Transverse colon (tissue), 4 donors: ENCODE measurements at regions of chr10 and their contacts with region 1.

Region 1: GRCh38 chr10:115849197-115849596 is 423.8 kb downstream of the GFRA1 start:
- DNase-seq: no peak
- H3K4me3 ChIP-seq: no peak overlapping the region
- H3K27ac ChIP-seq: no peak overlapping the region
- H3K4me1 ChIP-seq: no peaks in the 10 kb centered on the region
- H3K27me3 ChIP-seq: no peaks in the 10 kb centered on the region
- CTCF ChIP-seq: no peak
- EP300 ChIP-seq: no peak
- POLR2A ChIP-seq: no peak

Region 2: DNA sequence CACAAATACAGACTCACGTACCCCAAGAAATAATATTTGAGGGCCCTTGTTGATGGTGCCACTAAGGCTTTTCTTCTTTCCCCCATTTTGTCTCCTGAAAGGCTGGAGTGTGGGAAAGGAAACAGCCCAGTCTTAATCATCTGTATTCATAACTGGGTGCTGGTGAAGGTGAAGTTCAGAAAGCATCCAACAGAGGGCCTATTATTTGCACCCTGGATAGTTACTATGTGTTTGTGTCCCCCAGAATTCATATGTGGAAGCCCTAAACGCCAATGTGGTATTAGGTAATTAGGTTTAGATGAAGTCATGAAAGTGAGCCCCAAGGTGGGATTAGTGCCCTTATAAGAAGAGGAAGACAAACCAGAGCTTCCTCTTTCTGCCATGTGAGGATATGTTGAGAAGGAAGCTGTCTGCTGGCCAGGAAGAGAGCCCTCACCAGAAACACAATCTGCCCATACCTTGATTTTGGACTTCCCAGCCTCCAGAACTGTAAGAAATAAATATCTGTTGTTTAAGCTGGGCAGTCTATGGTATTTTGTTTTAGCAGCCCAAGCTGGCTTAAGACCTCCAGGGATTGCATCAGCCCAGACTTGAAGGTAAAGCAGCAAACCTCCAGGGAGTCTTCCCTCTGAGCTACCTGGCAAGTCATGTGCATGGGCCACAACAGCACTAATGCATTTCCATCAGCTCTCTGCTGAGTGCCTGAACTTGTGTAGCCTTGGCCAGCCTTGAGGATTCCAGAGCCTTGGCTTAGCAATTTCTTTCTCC is 1895.5 kb before region 1 on chr10:
- in situ Hi-C with region 1: no loop called
- intact Hi-C with region 1: loop called (anchors 5 kb)
- DNase-seq: no peak
- H3K4me3 ChIP-seq: no peak overlapping the region
- H3K27ac ChIP-seq: no peak overlapping the region
- H3K4me1 ChIP-seq: peaks cover 10 to 22% (median 20%) of the 10 kb centered on the region in 4 donors
- H3K27me3 ChIP-seq: no peaks in the 10 kb centered on the region
- CTCF ChIP-seq: peak in 2 of 5 experiments; percentile 24 to 25
- EP300 ChIP-seq: no peak
- POLR2A ChIP-seq: no peak